ENCODE measurements at regions of chr20 and their contacts with region 1.

Region 1: DNA sequence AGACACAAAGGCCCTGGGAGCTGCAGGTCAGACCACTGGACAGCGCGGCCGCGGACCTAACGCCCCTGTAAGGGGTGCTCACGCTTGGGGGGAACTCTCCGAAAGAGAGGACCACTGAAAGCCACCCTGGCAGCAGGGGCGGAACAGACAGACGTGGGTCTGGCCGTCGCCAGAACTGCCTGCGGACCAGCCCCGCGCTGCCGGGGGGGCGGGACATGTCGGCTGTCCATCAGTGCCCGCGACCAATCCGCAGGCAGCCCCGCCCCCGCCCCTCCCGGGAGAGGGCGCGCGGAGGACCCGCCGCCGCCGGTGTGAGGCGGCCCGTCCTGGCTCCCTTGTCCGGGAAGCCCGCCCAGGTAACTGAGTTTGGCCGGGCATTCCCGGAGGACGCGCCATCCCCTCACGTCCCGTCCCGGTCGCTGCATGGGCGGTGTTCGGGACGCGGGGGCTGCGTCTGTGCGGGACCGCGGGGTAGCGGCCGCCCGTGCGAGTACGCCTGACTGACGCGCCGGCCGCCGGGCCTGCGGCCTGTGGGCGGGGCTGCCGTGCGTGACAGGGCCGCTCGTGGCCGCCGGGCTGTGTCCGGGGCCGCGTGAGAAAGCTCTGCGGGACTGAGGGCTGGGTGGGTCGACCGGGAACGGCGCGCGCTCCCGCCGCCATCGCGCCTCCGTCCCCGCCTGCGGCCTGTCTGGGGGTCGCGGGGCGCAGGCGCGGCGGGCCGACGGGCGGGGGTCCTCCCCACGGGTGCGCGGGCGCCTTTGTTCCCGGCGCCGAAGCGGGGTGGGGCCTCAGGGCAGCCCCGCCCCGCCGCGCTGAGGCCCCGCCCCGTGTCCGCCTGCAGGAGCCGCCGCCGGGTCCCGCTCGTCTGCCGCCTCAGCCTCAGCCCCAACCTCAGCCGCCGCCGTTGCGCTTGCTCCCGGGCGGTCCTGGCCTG is at the start of gene PLCG1:
- DNase-seq: peak; percentile 83
- H3K4me3 Mint-ChIP-seq: peak within 1 kb of the TSS; percentile 79
- H3K27ac Mint-ChIP-seq: peak within 1 kb of the TSS; percentile 42
- H3K4me1 Mint-ChIP-seq: peaks cover 61% of the 10 kb centered on the region
- H3K27me3 Mint-ChIP-seq: no peaks in the 10 kb centered on the region
- CTCF ChIP-seq: no peak
- total RNA-seq, gene PLCG1: 33.2 and 48.1 TPM in 2 replicates

Region 2: GRCh38 chr20:40970201-40970600 is 166.7 kb before region 1 on chr20:
- CTCF ChIA-PET with region 1: interaction called, 17 read pairs
- POLR2A ChIA-PET with region 1: no interaction called
- intact Hi-C with region 1: no loop called
- DNase-seq: no peak
- H3K4me3 Mint-ChIP-seq: no peak overlapping the region
- H3K27ac Mint-ChIP-seq: no peak overlapping the region
- H3K4me1 Mint-ChIP-seq: peaks cover 14% of the 10 kb centered on the region
- H3K27me3 Mint-ChIP-seq: no peaks in the 10 kb centered on the region
- CTCF ChIP-seq: no peak

Region 3: DNA sequence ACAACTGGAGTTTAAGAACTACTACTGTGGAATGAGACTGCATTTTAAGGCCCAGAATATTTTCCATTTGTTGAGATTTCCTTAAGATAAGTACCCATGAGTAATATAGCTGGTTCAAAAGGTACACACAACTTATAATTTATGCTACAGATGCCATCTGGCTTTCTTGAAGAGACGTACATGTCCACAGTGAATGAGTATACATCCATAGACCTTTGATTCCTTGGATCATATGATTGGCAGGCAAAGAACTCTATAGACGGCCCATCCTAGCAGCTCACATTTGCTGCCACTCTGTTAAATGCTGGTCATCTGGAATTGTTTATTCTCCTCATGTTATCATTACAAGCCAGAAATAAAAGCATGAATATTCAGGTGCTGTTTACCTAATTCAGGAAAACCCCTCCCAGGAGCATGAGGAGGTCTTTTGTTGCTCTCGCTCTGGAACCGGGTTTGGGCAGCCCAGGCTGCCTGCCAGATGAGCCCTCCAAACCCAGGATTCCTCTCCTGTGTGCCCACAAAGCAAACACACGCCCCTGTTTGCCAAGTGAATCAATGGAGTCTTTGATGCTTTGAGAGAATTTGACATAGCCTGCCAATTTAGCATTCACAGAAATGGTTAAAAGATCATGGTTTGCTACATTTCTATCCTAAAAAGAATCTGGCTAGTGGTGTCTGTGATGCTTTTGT is 17.3 kb before region 1 on chr20:
- CTCF ChIA-PET with region 1: interaction called, 16 read pairs
- POLR2A ChIA-PET with region 1: interaction called, 16 read pairs
- intact Hi-C with region 1: no loop called
- DNase-seq: no peak
- H3K4me3 Mint-ChIP-seq: no peak overlapping the region
- H3K27ac Mint-ChIP-seq: no peak overlapping the region
- H3K4me1 Mint-ChIP-seq: peaks cover 14% of the 10 kb centered on the region
- H3K27me3 Mint-ChIP-seq: no peaks in the 10 kb centered on the region
- CTCF ChIP-seq: no peak

Region 4: GRCh38 chr20:41158082-41158645 is 21.2 kb after region 1 on chr20:
- CTCF ChIA-PET with region 1: interaction called, 13 read pairs
- POLR2A ChIA-PET with region 1: interaction called, 13 read pairs
- intact Hi-C with region 1: no loop called
- DNase-seq: no peak
- H3K4me3 Mint-ChIP-seq: no peak overlapping the region
- H3K27ac Mint-ChIP-seq: no peak overlapping the region
- H3K4me1 Mint-ChIP-seq: peaks cover 17% of the 10 kb centered on the region
- H3K27me3 Mint-ChIP-seq: no peaks in the 10 kb centered on the region
- CTCF ChIP-seq: no peak

Region 5: GRCh38 chr20:41213150-41213820 is 76.3 kb after region 1 on chr20:
- CTCF ChIA-PET with region 1: no interaction called
- POLR2A ChIA-PET with region 1: no interaction called
- intact Hi-C with region 1: no loop called
- DNase-seq: peak; percentile 24
- H3K4me3 Mint-ChIP-seq: no peak overlapping the region
- H3K27ac Mint-ChIP-seq: no peak overlapping the region
- H3K4me1 Mint-ChIP-seq: peaks cover 11% of the 10 kb centered on the region
- H3K27me3 Mint-ChIP-seq: no peaks in the 10 kb centered on the region
- CTCF ChIP-seq: no peak

Region 6: DNA sequence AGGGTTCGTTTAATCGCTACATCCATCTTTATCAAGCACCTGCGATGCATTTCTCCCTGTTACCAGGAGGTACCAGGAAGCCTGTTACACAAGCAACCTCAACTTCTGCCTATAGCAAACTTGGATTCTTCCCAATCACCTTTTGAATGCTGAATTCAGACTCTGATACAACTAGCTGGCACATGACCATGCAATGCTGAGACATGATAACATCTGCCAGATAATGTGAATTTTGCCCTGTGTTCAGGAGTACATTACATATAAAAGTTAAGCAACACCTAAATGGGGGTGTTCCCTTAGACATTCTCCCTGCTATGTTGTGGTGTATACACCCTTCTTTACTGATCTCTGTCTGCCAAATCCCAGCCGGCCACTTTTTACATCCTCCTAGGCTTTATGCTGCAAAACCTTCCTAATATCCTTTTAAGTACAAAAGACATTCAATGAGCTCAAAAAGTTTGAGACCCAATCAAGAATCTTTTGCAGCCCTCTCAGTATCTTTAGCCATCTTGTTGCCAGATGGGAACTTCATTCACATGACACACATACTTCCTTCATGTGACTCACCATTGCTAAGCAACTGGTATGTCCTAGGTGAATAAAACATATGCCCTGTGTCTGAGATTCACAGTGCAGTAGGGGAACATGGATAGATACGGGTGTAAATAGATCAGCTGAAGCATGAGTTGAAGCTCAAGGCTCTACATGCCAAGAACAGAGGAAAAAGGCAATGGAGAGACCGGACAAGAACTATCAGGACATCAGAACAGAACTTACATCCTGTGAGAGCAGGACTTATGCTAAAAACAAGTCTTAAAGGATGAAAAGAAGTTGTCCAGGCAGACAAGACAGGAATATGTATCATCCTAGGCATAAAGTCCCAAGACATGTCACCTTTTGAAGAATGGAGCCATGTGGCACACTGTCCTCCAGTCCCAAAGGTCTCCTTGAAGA is 96.3 kb after region 1 on chr20:
- CTCF ChIA-PET with region 1: interaction called, 38 read pairs
- POLR2A ChIA-PET with region 1: interaction called, 65 read pairs
- intact Hi-C with region 1: loop called (anchors 1 kb)
- DNase-seq: peak; percentile 73
- H3K4me3 Mint-ChIP-seq: peak overlapping the region; percentile 52
- H3K27ac Mint-ChIP-seq: peak overlapping the region; percentile 97
- H3K4me1 Mint-ChIP-seq: peaks cover 33% of the 10 kb centered on the region
- H3K27me3 Mint-ChIP-seq: no peaks in the 10 kb centered on the region
- CTCF ChIP-seq: no peak

Region 7: GRCh38 chr20:41261790-41262717 is 125.1 kb after region 1 on chr20:
- CTCF ChIA-PET with region 1: no interaction called
- POLR2A ChIA-PET with region 1: no interaction called
- intact Hi-C with region 1: no loop called
- DNase-seq: peak; percentile 45
- H3K4me3 Mint-ChIP-seq: no peak overlapping the region
- H3K27ac Mint-ChIP-seq: no peak overlapping the region
- H3K4me1 Mint-ChIP-seq: no peaks in the 10 kb centered on the region
- H3K27me3 Mint-ChIP-seq: no peaks in the 10 kb centered on the region
- CTCF ChIP-seq: no peak

Region 8: GRCh38 chr20:41329435-41330342 is 192.7 kb after region 1 on chr20:
- CTCF ChIA-PET with region 1: interaction called, 19 read pairs
- POLR2A ChIA-PET with region 1: interaction called, 5 read pairs
- intact Hi-C with region 1: no loop called
- DNase-seq: peak; percentile 92
- H3K4me3 Mint-ChIP-seq: peak overlapping the region; percentile 28
- H3K27ac Mint-ChIP-seq: peak overlapping the region; percentile 89
- H3K4me1 Mint-ChIP-seq: peaks cover 15% of the 10 kb centered on the region
- H3K27me3 Mint-ChIP-seq: no peaks in the 10 kb centered on the region
- CTCF ChIP-seq: no peak

Measured in MCF 10A (cell line).